ENCODE measurements at regions of chr19 and their contacts with region 1.

Region 1: DNA sequence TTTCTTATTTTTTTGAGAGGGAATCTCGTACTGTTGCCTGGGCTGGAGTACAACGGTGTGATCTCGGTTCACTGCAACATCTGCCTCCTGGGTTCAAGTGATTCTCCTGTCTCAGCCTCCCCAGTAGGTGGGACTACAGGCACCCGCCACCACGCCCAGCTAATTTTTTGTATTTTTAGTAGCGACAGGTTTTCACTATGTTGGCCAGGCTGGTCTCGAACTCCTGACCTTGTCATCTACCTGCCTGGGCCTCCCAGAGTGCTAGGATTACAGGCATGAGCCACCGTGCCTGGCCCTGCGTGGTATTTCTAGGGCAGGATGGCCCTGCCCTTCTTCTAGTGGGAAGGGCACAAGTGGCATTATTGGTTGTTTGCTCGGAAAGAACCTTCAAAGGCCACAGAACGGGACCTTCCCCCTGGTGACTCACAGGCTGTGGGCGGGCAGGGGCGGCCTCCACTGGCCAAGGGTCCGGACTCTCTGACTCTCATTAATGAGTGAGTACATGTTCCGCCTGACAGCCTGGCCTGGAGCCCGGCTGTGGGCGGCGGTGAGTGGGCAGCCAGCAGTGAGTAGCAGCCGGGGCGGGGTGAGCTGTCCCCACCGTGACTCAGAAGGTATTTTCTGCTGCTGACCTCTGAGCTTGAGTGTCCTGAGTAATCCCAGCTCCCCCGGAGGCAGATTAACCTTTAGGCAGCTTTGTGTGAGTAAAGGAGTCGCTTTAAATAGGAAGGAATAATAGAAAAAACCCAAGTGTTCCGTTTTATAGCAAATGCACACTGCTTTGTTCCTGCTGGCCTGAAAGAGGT is 5.1 kb downstream of the DOT1L start:
- DNase-seq: peak; percentile 71
- H3K4me3 Mint-ChIP-seq: peak overlapping the region; percentile 12
- H3K27ac Mint-ChIP-seq: peak overlapping the region; percentile 72
- H3K4me1 Mint-ChIP-seq: peaks cover 57% of the 10 kb centered on the region
- H3K27me3 Mint-ChIP-seq: no peaks in the 10 kb centered on the region

Region 2: DNA sequence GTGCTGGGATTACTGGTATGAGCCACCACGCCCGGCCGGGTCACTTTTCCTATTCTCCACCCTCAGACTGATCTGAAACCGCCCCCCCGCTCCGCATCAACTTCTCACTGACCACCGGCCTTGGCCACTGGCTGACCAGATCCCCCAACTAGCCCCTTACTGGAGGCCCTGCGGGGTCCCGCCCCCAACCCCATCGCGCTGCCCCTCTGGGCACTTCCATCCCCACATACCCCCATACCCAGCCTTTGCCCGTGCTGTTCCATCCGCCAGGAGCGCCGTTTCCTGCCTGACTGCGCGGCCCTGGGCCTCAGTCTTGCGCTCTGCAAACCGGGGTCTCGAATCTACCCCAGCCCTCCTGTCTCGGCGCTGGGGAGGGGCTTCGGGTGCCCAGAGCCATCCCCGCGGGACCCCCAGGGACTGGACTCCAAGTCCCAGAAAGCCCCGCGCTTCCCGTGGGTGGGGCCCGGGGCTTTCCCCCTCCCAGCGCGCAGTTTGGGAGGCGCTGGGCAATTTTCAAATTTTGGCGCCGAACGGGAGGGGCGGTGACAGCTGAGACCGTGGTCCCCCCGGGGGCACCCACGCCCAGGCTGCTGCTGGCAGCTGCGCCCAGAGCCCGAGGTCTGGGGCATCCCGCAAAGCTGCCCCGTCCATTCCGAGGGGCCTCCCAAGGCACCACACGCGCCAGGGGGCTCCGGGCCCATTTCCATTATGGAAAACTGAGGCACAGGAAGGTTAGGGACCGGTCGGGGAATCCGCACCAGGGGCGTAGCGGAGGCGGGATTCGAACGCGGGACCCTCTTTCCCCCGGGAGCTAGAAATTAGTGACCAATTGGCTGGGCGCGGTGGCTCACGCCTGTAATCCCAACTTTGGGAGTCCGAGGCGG is 293.2 kb after region 1 on chr19:
- CTCF ChIA-PET with region 1: no interaction called
- intact Hi-C with region 1: loop called (anchors 5 kb)
- DNase-seq: peak; percentile 75
- H3K4me3 Mint-ChIP-seq: peak overlapping the region; percentile 84
- H3K27ac Mint-ChIP-seq: peak overlapping the region; percentile 36
- H3K4me1 Mint-ChIP-seq: peaks cover 9% of the 10 kb centered on the region
- H3K27me3 Mint-ChIP-seq: peaks cover 2% of the 10 kb centered on the region